CD4-positive, alpha-beta T cell (primary cell): ENCODE measurements at regions of chr16 and their contacts with region 1.

Region 1: DNA sequence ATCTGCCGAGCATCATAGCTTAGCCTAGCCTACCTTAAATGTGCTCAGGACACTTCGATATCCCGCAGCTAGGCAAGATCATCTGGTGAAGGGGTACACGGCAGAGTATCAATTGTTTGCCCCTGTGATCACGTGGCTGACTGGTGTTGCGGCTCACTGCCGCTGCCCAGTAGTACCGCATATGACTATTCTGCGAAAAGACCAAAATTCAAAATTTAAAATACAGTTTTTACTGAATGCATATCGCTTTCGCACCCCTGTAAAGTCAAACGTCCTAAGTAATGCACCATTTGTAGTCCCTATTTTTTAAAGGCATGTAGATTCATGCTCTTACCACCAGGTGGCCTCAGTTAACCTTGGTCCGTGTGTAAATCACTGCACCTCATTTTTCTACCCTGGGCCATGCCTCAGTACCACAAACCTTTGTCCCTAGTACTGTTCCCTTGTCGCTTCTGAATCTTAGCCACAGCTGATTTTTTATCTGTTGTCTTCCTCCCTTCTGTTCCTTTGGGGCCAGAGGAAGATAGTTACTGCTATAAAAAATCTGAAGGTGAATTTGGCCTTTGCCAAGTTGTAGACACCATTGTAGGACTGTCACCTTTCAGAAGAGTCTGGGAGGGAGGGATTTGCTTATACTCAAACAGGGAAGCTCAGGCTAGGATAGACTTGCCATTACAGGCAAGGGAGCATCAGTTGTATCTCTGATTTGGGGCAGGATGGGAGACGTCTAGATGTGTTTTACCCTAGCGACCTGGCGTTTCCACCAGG is 34.4 kb downstream of the WWP2 start:
- DNase-seq: peak in 5 of 14 experiments; percentile 10 to 69 (median 37)
- ATAC-seq: peak; percentile 76
- H3K4me3 ChIP-seq: no peak overlapping the region
- H3K4me3 Mint-ChIP-seq: no peak overlapping the region
- H3K27ac ChIP-seq: no peak overlapping the region
- H3K27ac Mint-ChIP-seq: no peak overlapping the region
- H3K4me1 ChIP-seq: no peaks in the 10 kb centered on the region
- H3K4me1 Mint-ChIP-seq: peaks cover 6% of the 10 kb centered on the region
- H3K27me3 ChIP-seq: no peaks in the 10 kb centered on the region
- H3K27me3 Mint-ChIP-seq: no peaks in the 10 kb centered on the region
- CTCF ChIP-seq: peak; percentile 91

Region 2: GRCh38 chr16:68179196-68179795 is 1617.2 kb before region 1 on chr16:
- CTCF ChIA-PET with region 1: no interaction called
- POLR2A ChIA-PET with region 1: no interaction called
- intact Hi-C with region 1: no loop called
- DNase-seq: no peak
- ATAC-seq: no peak
- H3K4me3 ChIP-seq: no peak overlapping the region
- H3K4me3 Mint-ChIP-seq: no peak overlapping the region
- H3K27ac ChIP-seq: no peak overlapping the region
- H3K27ac Mint-ChIP-seq: peak overlapping the region; percentile 70
- H3K4me1 ChIP-seq: no peaks in the 10 kb centered on the region
- H3K4me1 Mint-ChIP-seq: peaks cover 12% of the 10 kb centered on the region
- H3K27me3 ChIP-seq: no peaks in the 10 kb centered on the region
- H3K27me3 Mint-ChIP-seq: no peaks in the 10 kb centered on the region
- CTCF ChIP-seq: no peak

Region 3: GRCh38 chr16:69691980-69692911 is 104.3 kb before region 1 on chr16:
- CTCF ChIA-PET with region 1: no interaction called
- POLR2A ChIA-PET with region 1: no interaction called
- intact Hi-C with region 1: no loop called
- DNase-seq: no peak
- ATAC-seq: no peak
- H3K4me3 ChIP-seq: no peak overlapping the region
- H3K4me3 Mint-ChIP-seq: no peak overlapping the region
- H3K27ac ChIP-seq: no peak overlapping the region
- H3K27ac Mint-ChIP-seq: no peak overlapping the region
- H3K4me1 ChIP-seq: no peaks in the 10 kb centered on the region
- H3K4me1 Mint-ChIP-seq: no peaks in the 10 kb centered on the region
- H3K27me3 ChIP-seq: no peaks in the 10 kb centered on the region
- H3K27me3 Mint-ChIP-seq: no peaks in the 10 kb centered on the region
- CTCF ChIP-seq: no peak

Region 4: GRCh38 chr16:69845181-69845580 is 48.6 kb after region 1 on chr16:
- CTCF ChIA-PET with region 1: no interaction called
- POLR2A ChIA-PET with region 1: no interaction called
- intact Hi-C with region 1: no loop called
- DNase-seq: no peak
- ATAC-seq: no peak
- H3K4me3 ChIP-seq: no peak overlapping the region
- H3K4me3 Mint-ChIP-seq: no peak overlapping the region
- H3K27ac ChIP-seq: no peak overlapping the region
- H3K27ac Mint-ChIP-seq: no peak overlapping the region
- H3K4me1 ChIP-seq: no peaks in the 10 kb centered on the region
- H3K4me1 Mint-ChIP-seq: no peaks in the 10 kb centered on the region
- H3K27me3 ChIP-seq: no peaks in the 10 kb centered on the region
- H3K27me3 Mint-ChIP-seq: no peaks in the 10 kb centered on the region
- CTCF ChIP-seq: no peak

Region 5: DNA sequence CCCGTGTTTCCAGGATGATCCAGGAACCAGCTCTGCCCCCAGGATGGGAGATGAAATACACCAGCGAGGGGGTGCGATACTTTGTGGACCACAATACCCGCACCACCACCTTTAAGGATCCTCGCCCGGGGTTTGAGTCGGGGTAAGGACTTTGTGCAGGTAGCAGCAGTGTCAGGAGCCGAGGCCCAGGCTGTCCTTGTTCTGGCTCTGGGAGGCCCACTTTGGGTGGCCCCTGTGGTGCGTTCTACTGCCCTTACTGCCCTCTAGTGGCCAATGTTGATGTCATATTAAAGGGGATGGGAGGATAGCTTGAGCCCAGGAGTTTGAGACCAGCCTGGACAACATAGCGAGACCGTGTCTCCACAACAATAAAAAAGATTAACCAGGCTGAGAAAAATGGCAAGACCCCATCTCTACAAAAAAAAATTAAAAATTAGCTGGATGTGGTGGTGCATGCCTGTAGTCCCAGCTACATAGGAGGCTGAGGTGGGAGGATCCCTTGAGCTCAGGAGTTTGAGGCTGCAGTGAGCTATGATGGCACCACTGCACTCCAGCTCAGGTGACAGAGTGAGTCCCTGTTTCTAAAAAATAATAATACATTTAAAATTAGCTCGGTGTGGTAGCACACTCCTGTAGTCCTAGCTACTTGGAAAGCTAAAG is 133.7 kb after region 1 on chr16:
- CTCF ChIA-PET with region 1: no interaction called
- POLR2A ChIA-PET with region 1: no interaction called
- intact Hi-C with region 1: loop called (anchors 1 to 10 kb)
- DNase-seq: peak in 12 of 14 experiments; percentile 1 to 71 (median 34)
- ATAC-seq: peak; percentile 67
- H3K4me3 ChIP-seq: no peak overlapping the region
- H3K4me3 Mint-ChIP-seq: no peak overlapping the region
- H3K27ac ChIP-seq: no peak overlapping the region
- H3K27ac Mint-ChIP-seq: no peak overlapping the region
- H3K4me1 ChIP-seq: no peaks in the 10 kb centered on the region
- H3K4me1 Mint-ChIP-seq: no peaks in the 10 kb centered on the region
- H3K27me3 ChIP-seq: no peaks in the 10 kb centered on the region
- H3K27me3 Mint-ChIP-seq: no peaks in the 10 kb centered on the region
- CTCF ChIP-seq: peak; percentile 80